ENCODE measurements at regions of chr10 and their contacts with region 1.

Region 1: GRCh38 chr10:6401562-6402348 is 178.3 kb downstream of the PRKCQ start:
- DNase-seq: peak; percentile 96 to 97
- ATAC-seq: peak; percentile 90
- H3K4me3 ChIP-seq: peak overlapping the region; percentile 25; the same call in 1 of the 3 replicates
- H3K27ac ChIP-seq: peak overlapping the region; percentile 91 to 96
- H3K4me1 ChIP-seq: peaks cover 72% of the 10 kb centered on the region
- CTCF ChIP-seq: peak; percentile 89
- EP300 ChIP-seq: peak; percentile 43 to 66; a peak in 2 of 5 replicates
- POLR2A ChIP-seq: no peak
- RAD21 ChIP-seq: peak; percentile 99

Region 2: GRCh38 chr10:6014241-6014761 is 387.5 kb before region 1 on chr10:
- CTCF ChIA-PET with region 1: interaction called, 18 read pairs
- POLR2A ChIA-PET with region 1: no interaction called
- DNase-seq: peak; percentile 40 to 55
- ATAC-seq: peak; percentile 74 to 89; a peak in 4 of 6 replicates
- H3K4me3 ChIP-seq: no peak overlapping the region
- H3K27ac ChIP-seq: no peak overlapping the region; a peak in 1 of 6 replicates
- H3K4me1 ChIP-seq: no peaks in the 10 kb centered on the region
- CTCF ChIP-seq: peak; percentile 80
- EP300 ChIP-seq: no peak
- POLR2A ChIP-seq: no peak
- RAD21 ChIP-seq: peak; percentile 56 to 63

Region 3: GRCh38 chr10:6053816-6054631 is 347.7 kb before region 1 on chr10:
- CTCF ChIA-PET with region 1: no interaction called
- POLR2A ChIA-PET with region 1: no interaction called
- DNase-seq: no peak
- ATAC-seq: no peak
- H3K4me3 ChIP-seq: no peak overlapping the region
- H3K27ac ChIP-seq: no peak overlapping the region
- H3K4me1 ChIP-seq: peaks cover 5% of the 10 kb centered on the region; the same call in 1 of the 3 replicates
- CTCF ChIP-seq: no peak
- EP300 ChIP-seq: no peak
- POLR2A ChIP-seq: no peak
- RAD21 ChIP-seq: no peak

Region 4: GRCh38 chr10:6136215-6137201 is 265.2 kb before region 1 on chr10:
- CTCF ChIA-PET with region 1: interaction called, 32 read pairs
- POLR2A ChIA-PET with region 1: no interaction called
- DNase-seq: no peak
- ATAC-seq: peak; percentile 14 to 35; a peak in 3 of 6 replicates
- H3K4me3 ChIP-seq: no peak overlapping the region
- H3K27ac ChIP-seq: no peak overlapping the region; a peak in 1 of 6 replicates
- H3K4me1 ChIP-seq: peaks cover 15% of the 10 kb centered on the region; the same call in 2 of the 3 replicates
- CTCF ChIP-seq: no peak
- EP300 ChIP-seq: no peak
- POLR2A ChIP-seq: no peak
- RAD21 ChIP-seq: no peak

Region 5: GRCh38 chr10:6195846-6196245 is 205.9 kb before region 1 on chr10:
- CTCF ChIA-PET with region 1: interaction called, 332 read pairs
- POLR2A ChIA-PET with region 1: interaction called, 8 read pairs
- DNase-seq: no peak
- ATAC-seq: no peak
- H3K4me3 ChIP-seq: no peak overlapping the region
- H3K27ac ChIP-seq: no peak overlapping the region
- H3K4me1 ChIP-seq: peaks cover 13% of the 10 kb centered on the region; the same call in 2 of the 3 replicates
- CTCF ChIP-seq: no peak
- EP300 ChIP-seq: no peak
- POLR2A ChIP-seq: no peak
- RAD21 ChIP-seq: no peak

Region 6: GRCh38 chr10:6232846-6233724 is 168.7 kb before region 1 on chr10:
- CTCF ChIA-PET with region 1: interaction called, 19 read pairs
- POLR2A ChIA-PET with region 1: interaction called, 9 read pairs
- DNase-seq: no peak
- ATAC-seq: peak in 1 of 2 experiments; percentile 0; a peak in 1 of 6 replicates
- H3K4me3 ChIP-seq: no peak overlapping the region
- H3K27ac ChIP-seq: peak overlapping the region; percentile 55 to 82; a peak in 5 of 6 replicates
- H3K4me1 ChIP-seq: peaks cover 85% of the 10 kb centered on the region
- CTCF ChIP-seq: no peak
- EP300 ChIP-seq: no peak
- POLR2A ChIP-seq: no peak
- RAD21 ChIP-seq: no peak

Region 7: DNA sequence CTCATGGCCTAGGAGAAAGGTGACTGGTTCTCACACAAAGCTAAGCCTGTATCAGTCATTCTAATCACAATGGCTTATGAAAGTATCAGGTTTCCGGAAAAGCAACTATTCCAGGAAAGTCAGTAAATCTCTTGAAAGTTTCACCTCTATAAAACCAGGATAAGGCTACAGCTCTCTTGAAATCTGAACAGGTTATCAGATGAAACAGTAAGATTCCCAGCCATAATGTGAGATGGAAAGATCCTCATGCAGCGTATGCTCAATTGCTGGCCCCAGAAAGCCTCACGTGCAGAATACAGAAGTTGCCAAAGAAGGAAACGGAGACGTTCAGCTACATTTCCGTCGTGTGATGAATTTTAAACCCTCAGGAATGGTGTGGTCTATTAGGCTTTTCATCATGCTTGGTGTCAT is 109.0 kb before region 1 on chr10:
- CTCF ChIA-PET with region 1: interaction called, 19 read pairs
- POLR2A ChIA-PET with region 1: interaction called, 10 read pairs
- DNase-seq: no peak
- ATAC-seq: no peak
- H3K4me3 ChIP-seq: no peak overlapping the region
- H3K27ac ChIP-seq: peak overlapping the region; percentile 88 to 89
- H3K4me1 ChIP-seq: peaks cover 42% of the 10 kb centered on the region
- CTCF ChIP-seq: no peak
- EP300 ChIP-seq: no peak
- POLR2A ChIP-seq: no peak
- RAD21 ChIP-seq: no peak

Region 8: GRCh38 chr10:6388261-6388893 is 13.4 kb before region 1 on chr10:
- CTCF ChIA-PET with region 1: interaction called, 19 read pairs
- POLR2A ChIA-PET with region 1: no interaction called
- DNase-seq: no peak
- ATAC-seq: no peak
- H3K4me3 ChIP-seq: no peak overlapping the region
- H3K27ac ChIP-seq: peak overlapping the region in 1 of 2 experiments; percentile 52; a peak in 2 of 6 replicates
- H3K4me1 ChIP-seq: peaks cover 16% of the 10 kb centered on the region; the same call in 2 of the 3 replicates
- CTCF ChIP-seq: no peak
- EP300 ChIP-seq: no peak
- POLR2A ChIP-seq: no peak
- RAD21 ChIP-seq: no peak